Calu3 (cell line): ENCODE measurements at regions of chr7 and their contacts with region 1.

Region 1: DNA sequence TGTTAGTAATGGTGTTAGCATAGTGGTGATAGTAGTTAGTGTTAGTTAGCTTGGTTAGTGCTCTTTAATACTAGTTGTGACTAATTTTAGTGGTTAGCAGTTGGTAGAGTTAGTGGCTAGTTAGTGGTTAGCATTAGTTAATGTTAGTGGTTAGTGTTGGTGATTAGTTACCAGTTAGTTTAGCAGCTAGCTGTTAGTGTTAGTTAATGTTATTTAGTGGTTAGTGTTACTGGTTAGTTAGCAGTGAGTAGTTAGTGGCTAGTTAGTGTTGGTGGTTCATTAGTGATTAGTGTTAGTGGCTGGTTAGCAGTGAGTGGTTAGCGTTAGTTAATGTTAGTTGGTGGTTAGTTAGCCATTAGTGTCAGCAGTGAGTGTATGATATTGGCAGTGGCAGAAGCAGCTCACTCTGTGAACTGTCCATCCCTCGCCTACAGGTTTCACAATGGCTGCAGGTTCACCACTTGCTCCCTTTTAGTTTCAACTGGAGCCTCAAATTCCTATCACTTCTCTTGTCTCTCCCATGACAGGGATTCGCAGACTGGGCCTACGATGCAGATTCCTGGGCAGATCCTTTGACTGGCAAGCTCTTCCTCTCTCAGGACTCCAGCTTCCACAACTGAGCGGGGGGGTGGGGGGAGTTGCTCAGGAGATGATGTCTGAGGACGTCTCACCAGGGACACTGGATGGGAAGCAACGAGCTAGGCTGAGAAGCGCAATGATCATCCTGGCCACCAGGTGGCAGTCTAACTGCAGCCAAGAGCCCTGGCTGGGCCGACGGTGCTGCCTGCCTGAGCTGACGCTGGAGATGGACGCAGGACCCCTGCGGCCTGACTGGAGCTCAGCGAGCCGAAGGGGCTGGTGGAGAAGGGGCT is 19.5 kb downstream of the GHRHR start:
- DNase-seq: peak; percentile 96
- H3K4me3 Mint-ChIP-seq: peak overlapping the region; percentile 13
- H3K27ac Mint-ChIP-seq: no peak overlapping the region
- H3K4me1 Mint-ChIP-seq: peaks cover 30% of the 10 kb centered on the region
- H3K27me3 Mint-ChIP-seq: peaks cover 51% of the 10 kb centered on the region
- CTCF ChIP-seq: peak; percentile 97

Region 2: DNA sequence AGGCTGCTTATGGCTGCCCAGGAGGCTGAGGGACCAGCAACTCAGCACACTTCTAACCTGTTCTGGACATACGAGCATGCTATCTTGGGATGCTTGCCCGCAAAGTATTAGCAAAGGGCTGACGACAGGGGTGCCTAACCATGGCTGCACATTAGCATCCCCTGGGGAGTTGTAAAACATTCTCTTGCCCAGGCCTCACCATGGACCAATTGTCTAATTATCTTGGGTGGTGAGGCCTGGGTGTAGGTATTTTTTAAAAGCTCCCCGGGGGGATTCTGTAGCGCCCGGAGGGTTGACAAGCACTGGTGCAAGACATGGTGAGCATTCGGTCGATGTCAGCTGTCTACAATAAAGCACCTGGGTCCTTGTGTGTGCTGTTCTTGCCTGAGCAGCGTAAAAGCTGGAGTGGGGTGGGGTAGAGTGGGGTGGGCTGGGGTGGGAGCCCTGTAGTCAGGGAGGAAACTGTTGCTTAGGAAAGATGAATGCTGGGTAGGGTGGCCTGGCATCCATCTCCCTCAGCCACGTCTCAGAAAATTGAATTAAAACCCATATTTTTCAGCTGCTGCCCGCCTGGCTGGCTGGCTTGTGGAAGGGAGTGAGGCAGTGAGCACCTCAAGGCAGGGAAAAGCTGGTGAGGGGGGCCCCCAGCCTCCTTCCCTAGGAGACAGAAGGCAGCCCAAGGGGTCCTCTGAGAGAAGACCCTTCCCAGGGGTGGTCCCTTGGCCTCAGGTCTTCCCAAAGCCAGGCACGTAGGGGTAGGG is 65.9 kb after region 1 on chr7:
- CTCF ChIA-PET with region 1: no interaction called
- intact Hi-C with region 1: no loop called
- DNase-seq: no peak
- H3K4me3 Mint-ChIP-seq: no peak overlapping the region
- H3K27ac Mint-ChIP-seq: no peak overlapping the region
- H3K4me1 Mint-ChIP-seq: no peaks in the 10 kb centered on the region
- H3K27me3 Mint-ChIP-seq: peaks cover 75% of the 10 kb centered on the region
- CTCF ChIP-seq: no peak

Region 3: GRCh38 chr7:31061185-31061584 is 77.9 kb after region 1 on chr7:
- CTCF ChIA-PET with region 1: interaction called, 7 read pairs
- intact Hi-C with region 1: loop called (anchors 10 kb)
- DNase-seq: peak; percentile 43
- H3K4me3 Mint-ChIP-seq: no peak overlapping the region
- H3K27ac Mint-ChIP-seq: no peak overlapping the region
- H3K4me1 Mint-ChIP-seq: no peaks in the 10 kb centered on the region
- H3K27me3 Mint-ChIP-seq: peaks cover 100% of the 10 kb centered on the region
- CTCF ChIP-seq: peak; percentile 29